ENCODE measurements at regions of chr16 and their contacts with region 1.

Region 1: GRCh38 chr16:527006-527753 is at the start of gene CAPN15:
- DNase-seq: peak; percentile 90
- H3K4me3 ChIP-seq: peak within 1 kb of the TSS; percentile 42 to 81 (median 78)
- H3K27ac ChIP-seq: peak within 1 kb of the TSS; percentile 90
- H3K4me1 ChIP-seq: peaks cover 35% of the 10 kb centered on the region
- H3K27me3 ChIP-seq: no peaks in the 10 kb centered on the region
- CTCF ChIP-seq: no peak
- POLR2A ChIP-seq: peak; percentile 65
- total RNA-seq, gene CAPN15: 65.0 and 70.1 TPM in 2 replicates

Region 2: GRCh38 chr16:401468-402348 is 125.5 kb before region 1 on chr16 and contains the start of gene DECR2:
- CTCF ChIA-PET with region 1: no interaction called
- POLR2A ChIA-PET with region 1: no interaction called
- dilution Hi-C with region 1: no loop called
- intact Hi-C with region 1: loop called (anchors 2 kb)
- DNase-seq: peak; percentile 87
- H3K4me3 ChIP-seq: peak within 1 kb of the TSS; percentile 58 to 74 (median 63)
- H3K27ac ChIP-seq: peak within 1 kb of the TSS; percentile 45
- H3K4me1 ChIP-seq: peaks cover 11% of the 10 kb centered on the region
- H3K27me3 ChIP-seq: no peaks in the 10 kb centered on the region
- CTCF ChIP-seq: peak; percentile 38 to 60
- POLR2A ChIP-seq: peak; percentile 94
- total RNA-seq, gene DECR2: 23.1 and 28.3 TPM in 2 replicates

Region 3: GRCh38 chr16:468068-468821 is 58.9 kb before region 1 on chr16:
- CTCF ChIA-PET with region 1: no interaction called
- POLR2A ChIA-PET with region 1: no interaction called
- dilution Hi-C with region 1: no loop called
- intact Hi-C with region 1: no loop called
- DNase-seq: no peak
- H3K4me3 ChIP-seq: no peak overlapping the region
- H3K27ac ChIP-seq: no peak overlapping the region
- H3K4me1 ChIP-seq: no peaks in the 10 kb centered on the region
- H3K27me3 ChIP-seq: no peaks in the 10 kb centered on the region
- CTCF ChIP-seq: no peak
- POLR2A ChIP-seq: no peak

Region 4: GRCh38 chr16:569445-570254 is 42.5 kb after region 1 on chr16 and contains the start of gene PIGQ:
- CTCF ChIA-PET with region 1: interaction called, 3 read pairs
- POLR2A ChIA-PET with region 1: no interaction called
- dilution Hi-C with region 1: no loop called
- intact Hi-C with region 1: loop called (anchors 5 kb)
- DNase-seq: peak; percentile 60
- H3K4me3 ChIP-seq: peak within 1 kb of the TSS; percentile 71 to 99 (median 87)
- H3K27ac ChIP-seq: peak within 1 kb of the TSS; percentile 33
- H3K4me1 ChIP-seq: peaks cover 24% of the 10 kb centered on the region
- H3K27me3 ChIP-seq: no peaks in the 10 kb centered on the region
- CTCF ChIP-seq: no peak
- POLR2A ChIP-seq: peak; percentile 44
- total RNA-seq, gene PIGQ: 56.8 and 67.7 TPM in 2 replicates

Region 5: DNA sequence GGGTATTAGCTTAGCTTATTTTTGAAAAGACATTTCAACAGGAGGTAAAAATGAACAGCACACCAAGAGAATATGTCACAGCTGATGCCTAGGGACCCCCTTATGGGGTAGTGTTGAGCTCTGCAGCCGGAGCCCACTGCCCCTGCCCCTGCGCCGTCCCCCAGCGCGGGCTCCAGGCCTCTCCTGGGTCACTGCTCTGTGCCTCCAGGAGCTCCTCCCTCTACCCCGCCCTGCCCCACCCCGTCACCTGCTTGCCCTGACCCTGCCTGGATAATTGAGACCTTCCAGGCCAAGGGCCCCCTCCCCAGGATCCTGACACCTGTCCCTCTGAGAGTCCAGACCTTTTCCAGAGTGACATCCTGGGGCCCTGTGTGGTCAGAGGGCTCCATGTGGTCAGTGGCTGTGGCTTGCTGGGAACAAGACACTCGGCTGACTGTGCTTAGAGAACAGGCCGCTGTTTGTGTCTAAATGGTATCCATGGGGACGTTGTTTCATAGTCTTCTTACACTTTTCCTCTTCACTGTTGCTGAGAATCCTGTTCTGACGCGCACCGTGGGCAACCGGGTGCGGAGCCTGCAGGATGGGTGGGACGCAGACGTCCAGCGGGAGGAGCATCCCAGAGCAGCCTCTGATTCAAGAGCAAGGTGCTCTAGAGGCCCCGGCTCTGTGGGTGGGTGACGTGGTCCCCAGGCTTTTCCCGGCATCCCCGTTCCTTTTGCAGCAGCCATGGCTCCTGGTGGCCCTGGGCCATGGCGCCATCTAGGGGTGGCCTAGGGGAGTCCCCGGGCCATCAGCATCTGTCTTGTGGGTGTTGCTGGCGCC is 83.5 kb after region 1 on chr16:
- CTCF ChIA-PET with region 1: no interaction called
- POLR2A ChIA-PET with region 1: no interaction called
- dilution Hi-C with region 1: no loop called
- intact Hi-C with region 1: no loop called
- DNase-seq: no peak
- H3K4me3 ChIP-seq: no peak overlapping the region
- H3K27ac ChIP-seq: no peak overlapping the region
- H3K4me1 ChIP-seq: no peaks in the 10 kb centered on the region
- H3K27me3 ChIP-seq: no peaks in the 10 kb centered on the region
- CTCF ChIP-seq: peak; percentile 38 to 64
- POLR2A ChIP-seq: no peak